ENCODE measurements at regions of chr3 and their contacts with region 1.

Region 1: DNA sequence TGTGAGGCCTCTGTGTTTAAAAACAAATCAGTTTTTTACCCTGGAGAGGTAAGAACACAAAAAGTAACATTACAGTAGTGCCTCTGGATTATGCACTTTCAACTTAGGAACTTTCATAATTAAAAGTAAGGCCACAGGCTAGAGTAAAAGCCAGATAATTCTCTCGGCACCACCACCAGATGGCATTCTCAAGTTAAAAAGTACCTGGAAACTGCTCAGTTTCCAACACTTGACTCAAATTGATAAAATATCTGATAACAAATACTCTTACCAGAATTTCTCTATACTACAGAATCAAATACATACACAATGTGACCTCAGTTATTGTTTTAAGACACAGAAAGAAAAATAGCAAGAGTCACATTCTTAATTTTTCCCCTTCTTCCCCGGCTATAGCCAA is 19.9 kb downstream of the SPICE1 start:
- DNase-seq: peak; percentile 66
- H3K4me3 Mint-ChIP-seq: no peak overlapping the region
- H3K27ac Mint-ChIP-seq: no peak overlapping the region
- H3K4me1 Mint-ChIP-seq: no peaks in the 10 kb centered on the region
- H3K27me3 Mint-ChIP-seq: no peaks in the 10 kb centered on the region

Region 2: DNA sequence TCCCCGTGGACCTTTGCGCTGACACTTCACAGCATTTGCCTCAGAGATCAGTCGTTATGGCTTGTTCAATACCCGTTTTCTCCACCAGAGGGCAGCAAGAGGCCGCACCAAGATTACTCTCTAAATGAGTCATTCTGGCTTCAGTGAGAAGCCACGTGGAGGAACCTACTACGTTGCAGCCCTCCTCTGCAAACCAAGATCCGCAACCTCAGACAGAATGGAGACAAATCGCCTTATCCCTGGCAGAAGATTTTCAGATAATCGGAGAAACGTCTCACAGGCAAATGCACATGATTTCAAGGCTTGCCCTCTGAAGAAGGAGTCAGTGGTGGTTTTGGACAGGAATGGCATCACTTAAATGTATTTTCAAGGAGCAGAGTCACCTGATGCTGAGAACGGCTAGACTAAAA is 443.7 kb before region 1 on chr3:
- CTCF ChIA-PET with region 1: no interaction called
- intact Hi-C with region 1: loop called (anchors 5 kb)
- DNase-seq: peak; percentile 96
- H3K4me3 Mint-ChIP-seq: no peak overlapping the region
- H3K27ac Mint-ChIP-seq: no peak overlapping the region
- H3K4me1 Mint-ChIP-seq: peaks cover 12% of the 10 kb centered on the region
- H3K27me3 Mint-ChIP-seq: no peaks in the 10 kb centered on the region

Region 3: GRCh38 chr3:113514265-113514769 is 19.3 kb after region 1 on chr3:
- CTCF ChIA-PET with region 1: interaction called, 7 read pairs
- intact Hi-C with region 1: loop called (anchors 2 kb)
- DNase-seq: no peak
- H3K4me3 Mint-ChIP-seq: no peak overlapping the region
- H3K27ac Mint-ChIP-seq: no peak overlapping the region
- H3K4me1 Mint-ChIP-seq: peaks cover 12% of the 10 kb centered on the region
- H3K27me3 Mint-ChIP-seq: peaks cover 12% of the 10 kb centered on the region

Region 4: DNA sequence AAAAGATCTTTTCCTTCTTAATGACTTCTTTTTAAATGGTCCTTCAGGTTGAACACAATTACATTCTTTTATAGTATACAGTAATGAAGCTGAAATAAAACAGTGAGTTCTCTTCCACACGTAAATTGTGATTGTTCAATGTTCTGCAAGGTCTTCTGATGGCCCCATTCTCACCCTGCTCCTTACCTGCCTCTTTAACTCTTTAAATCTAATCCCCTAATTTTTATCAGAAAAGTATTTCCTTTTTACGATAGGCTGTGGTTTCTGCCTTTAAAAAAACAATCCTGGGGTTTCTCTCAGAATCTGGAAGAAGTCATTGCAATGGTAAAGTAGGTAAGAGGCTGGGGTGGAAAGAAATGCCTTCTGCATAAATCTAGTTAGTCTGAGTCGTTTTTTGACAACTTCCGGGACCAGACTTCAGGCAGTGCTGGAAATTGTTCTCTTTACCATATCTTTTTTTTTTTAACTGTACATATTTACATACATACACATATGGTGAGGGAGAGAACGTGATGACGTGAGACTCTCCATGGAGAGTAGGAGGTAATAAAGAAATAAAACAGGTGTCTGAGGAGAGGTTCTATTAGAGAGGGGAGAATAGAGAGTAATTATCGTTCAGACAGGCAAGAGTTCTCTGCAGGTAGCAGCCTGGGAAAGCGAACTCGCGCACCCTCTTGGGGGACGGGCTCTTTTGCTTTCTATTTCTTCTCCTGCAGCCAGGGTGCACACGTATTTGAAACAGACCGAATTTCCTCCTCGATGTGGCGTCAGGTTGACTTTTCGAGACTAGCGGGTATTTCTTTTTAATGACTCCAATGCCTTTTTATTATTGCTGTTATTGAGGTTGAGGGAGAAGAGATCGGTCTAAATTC is 37.0 kb after region 1 on chr3 and contains the start of gene SIDT1:
- CTCF ChIA-PET with region 1: interaction called, 5 read pairs
- intact Hi-C with region 1: loop called (anchors 1 kb)
- DNase-seq: peak; percentile 82
- H3K4me3 Mint-ChIP-seq: peak within 1 kb of the TSS; percentile 97
- H3K27ac Mint-ChIP-seq: peak within 1 kb of the TSS; percentile 96
- H3K4me1 Mint-ChIP-seq: peaks cover 46% of the 10 kb centered on the region
- H3K27me3 Mint-ChIP-seq: no peaks in the 10 kb centered on the region
- total RNA-seq, gene SIDT1: 14.6 to 14.9 TPM

Region 5: DNA sequence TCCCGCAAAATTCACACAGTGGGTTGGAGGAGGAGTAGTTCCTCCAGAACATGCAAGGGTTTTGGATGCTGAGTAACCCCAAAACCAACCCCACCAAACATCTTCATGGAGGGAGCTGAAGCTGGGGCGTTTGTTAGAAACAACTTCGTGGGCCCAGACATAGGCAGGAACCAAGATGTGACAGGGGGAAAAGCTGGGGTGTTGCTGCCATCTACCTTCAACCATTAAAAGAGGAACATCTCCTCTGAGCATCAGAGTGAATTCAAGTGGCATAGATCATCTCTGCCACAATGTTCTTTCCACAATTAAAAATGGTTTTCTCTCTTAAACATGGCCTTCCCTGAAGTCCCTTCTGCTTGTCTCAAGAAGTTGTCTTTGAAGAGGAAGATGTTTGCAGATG is 57.8 kb after region 1 on chr3:
- CTCF ChIA-PET with region 1: interaction called, 18 read pairs
- intact Hi-C with region 1: loop called (anchors 1 kb)
- DNase-seq: peak; percentile 48
- H3K4me3 Mint-ChIP-seq: no peak overlapping the region
- H3K27ac Mint-ChIP-seq: no peak overlapping the region
- H3K4me1 Mint-ChIP-seq: peaks cover 18% of the 10 kb centered on the region
- H3K27me3 Mint-ChIP-seq: no peaks in the 10 kb centered on the region

Region 6: GRCh38 chr3:113626503-113627371 is 131.7 kb after region 1 on chr3:
- CTCF ChIA-PET with region 1: interaction called, 3 read pairs
- intact Hi-C with region 1: loop called (anchors 1 kb)
- DNase-seq: peak; percentile 44
- H3K4me3 Mint-ChIP-seq: no peak overlapping the region
- H3K27ac Mint-ChIP-seq: no peak overlapping the region
- H3K4me1 Mint-ChIP-seq: no peaks in the 10 kb centered on the region
- H3K27me3 Mint-ChIP-seq: no peaks in the 10 kb centered on the region

Region 7: DNA sequence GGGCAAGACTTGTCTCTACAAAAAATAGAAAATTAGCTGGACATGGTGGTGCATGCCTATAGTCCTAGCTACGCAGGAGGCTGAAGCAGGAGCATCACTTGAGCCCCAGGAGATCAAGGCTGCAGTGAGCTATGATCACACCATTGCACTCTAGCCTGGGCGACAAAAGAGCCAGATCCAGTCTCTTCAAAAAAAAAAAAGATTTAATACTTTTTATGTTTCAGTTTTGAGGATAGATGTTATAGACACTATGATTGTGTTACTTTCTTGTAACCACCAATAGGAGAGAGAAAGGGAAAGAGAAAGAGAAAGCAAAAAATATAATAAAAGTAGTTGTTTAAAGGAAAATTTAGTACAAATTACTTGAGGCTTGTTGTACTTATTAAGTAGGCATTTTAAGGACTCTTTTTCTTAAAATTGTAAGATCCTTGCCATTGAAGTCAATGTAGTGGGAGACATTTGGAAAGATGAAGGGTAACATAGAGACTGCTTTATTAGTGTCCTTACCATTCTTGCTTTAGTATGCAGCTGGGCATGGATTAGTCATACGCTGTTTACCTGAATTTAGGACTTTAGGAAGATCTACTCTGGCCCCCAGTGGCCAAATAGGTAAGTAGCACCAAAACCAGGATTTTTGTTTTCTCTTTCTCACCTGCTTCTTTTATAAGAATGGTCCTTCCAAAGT is 417.7 kb after region 1 on chr3:
- CTCF ChIA-PET with region 1: interaction called, 3 read pairs
- intact Hi-C with region 1: loop called (anchors 1 kb)
- DNase-seq: peak; percentile 55
- H3K4me3 Mint-ChIP-seq: no peak overlapping the region
- H3K27ac Mint-ChIP-seq: no peak overlapping the region
- H3K4me1 Mint-ChIP-seq: peaks cover 3% of the 10 kb centered on the region
- H3K27me3 Mint-ChIP-seq: no peaks in the 10 kb centered on the region

Measured in activated naive CD4-positive, alpha-beta T cell treated with anti-CD3 and anti-CD28 coated beads for 36 hours (primary cell).